Right cardiac atrium (tissue), 5 donors: ENCODE measurements at regions of chr2 and their contacts with region 1.

Region 1: GRCh38 chr2:88190808-88191721 is 20.9 kb downstream of the THNSL2 start:
- DNase-seq: no peak
- ATAC-seq: peak; percentile 52 to 60
- H3K4me3 ChIP-seq: no peak overlapping the region
- H3K27ac ChIP-seq: no peak overlapping the region
- H3K4me1 ChIP-seq: peaks cover 2% of the 10 kb centered on the region
- H3K27me3 ChIP-seq: no peaks in the 10 kb centered on the region

Region 2: DNA sequence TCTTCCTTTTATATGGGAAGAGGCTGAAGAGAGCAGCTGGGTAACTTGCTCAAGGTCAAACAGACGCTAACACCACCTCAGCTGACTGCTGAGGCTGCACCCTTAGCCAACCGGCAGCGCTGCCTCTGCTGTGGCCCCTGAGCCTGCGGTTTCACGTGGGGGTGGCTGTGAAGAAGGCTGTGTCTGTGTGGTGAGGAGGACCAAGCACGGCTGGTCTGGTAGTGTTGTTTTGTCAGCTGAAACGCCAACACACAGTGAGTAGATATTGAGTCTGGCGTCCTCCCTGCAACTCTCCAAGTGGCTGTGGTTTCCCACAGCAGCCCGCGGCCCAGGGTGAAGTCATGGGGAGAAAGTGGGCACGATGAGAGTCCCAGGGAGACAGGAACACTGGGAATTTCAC is 48.7 kb after region 1 on chr2:
- intact Hi-C with region 1: no loop called
- DNase-seq: no peak
- ATAC-seq: no peak
- H3K4me3 ChIP-seq: no peak overlapping the region
- H3K27ac ChIP-seq: no peak overlapping the region
- H3K4me1 ChIP-seq: no peaks in the 10 kb centered on the region
- H3K27me3 ChIP-seq: peaks cover 1% of the 10 kb centered on the region

Region 3: GRCh38 chr2:88307817-88308216 is 116.8 kb after region 1 on chr2:
- intact Hi-C with region 1: loop called in 1 of 4 experiments (anchors 5 kb)
- DNase-seq: no peak
- ATAC-seq: no peak
- H3K4me3 ChIP-seq: no peak overlapping the region
- H3K27ac ChIP-seq: no peak overlapping the region
- H3K4me1 ChIP-seq: no peaks in the 10 kb centered on the region
- H3K27me3 ChIP-seq: no peaks in the 10 kb centered on the region

Region 4: GRCh38 chr2:88880441-88880953 is 689.4 kb after region 1 on chr2:
- intact Hi-C with region 1: no loop called
- DNase-seq: peak in 1 of 3 donors; percentile 29
- ATAC-seq: peak; percentile 82
- H3K4me3 ChIP-seq: no peak overlapping the region
- H3K27ac ChIP-seq: no peak overlapping the region
- H3K4me1 ChIP-seq: no peaks in the 10 kb centered on the region
- H3K27me3 ChIP-seq: no peaks in the 10 kb centered on the region